MCF 10A (cell line): ENCODE measurements at regions of chr13 and their contacts with region 1.

Region 1: GRCh38 chr13:69769608-69770007 is 338.0 kb upstream of the ATXN8OS start:
- DNase-seq: no peak
- H3K4me3 Mint-ChIP-seq: no peak overlapping the region
- H3K27ac Mint-ChIP-seq: no peak overlapping the region
- H3K4me1 Mint-ChIP-seq: no peaks in the 10 kb centered on the region
- H3K27me3 Mint-ChIP-seq: peaks cover 22% of the 10 kb centered on the region
- CTCF ChIP-seq: no peak

Region 2: DNA sequence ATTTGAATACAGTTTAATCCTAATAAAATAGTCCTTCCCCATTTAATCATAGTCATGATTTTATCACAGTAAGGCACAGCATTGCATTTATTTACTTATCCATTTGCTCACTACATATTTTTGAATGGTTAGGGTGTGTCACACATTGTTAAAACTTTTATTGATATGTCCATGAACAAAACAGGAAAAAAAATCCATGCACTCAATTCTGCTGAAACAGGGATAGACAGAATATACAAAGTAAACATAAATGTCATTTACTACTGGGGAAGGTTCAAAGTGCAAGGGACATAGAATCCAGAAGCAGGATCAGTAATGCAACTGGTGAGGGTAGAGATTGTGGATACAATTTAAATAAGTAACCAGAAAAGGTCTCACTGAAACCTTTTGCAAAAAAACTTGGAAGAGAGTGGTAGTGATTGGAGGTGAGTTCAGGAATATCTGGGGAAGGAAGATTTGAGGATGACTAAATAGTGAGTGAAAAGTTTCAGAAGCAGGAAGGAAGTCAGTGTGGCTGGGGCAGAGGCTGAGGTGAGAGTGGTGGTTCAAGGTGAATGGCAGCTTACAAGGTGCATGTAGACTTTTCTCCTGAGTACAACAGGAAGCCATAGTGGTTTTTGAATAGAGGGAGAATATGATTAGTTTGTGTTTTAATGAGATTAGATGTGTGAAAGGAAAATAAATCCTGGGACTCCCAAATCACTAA is 49.2 kb before region 1 on chr13:
- CTCF ChIA-PET with region 1: no interaction called
- POLR2A ChIA-PET with region 1: no interaction called
- intact Hi-C with region 1: loop called (anchors 5 kb)
- DNase-seq: no peak
- H3K4me3 Mint-ChIP-seq: no peak overlapping the region
- H3K27ac Mint-ChIP-seq: no peak overlapping the region
- H3K4me1 Mint-ChIP-seq: no peaks in the 10 kb centered on the region
- H3K27me3 Mint-ChIP-seq: peaks cover 55% of the 10 kb centered on the region
- CTCF ChIP-seq: no peak